ENCODE measurements at regions of chr19 and their contacts with region 1.

Region 1: DNA sequence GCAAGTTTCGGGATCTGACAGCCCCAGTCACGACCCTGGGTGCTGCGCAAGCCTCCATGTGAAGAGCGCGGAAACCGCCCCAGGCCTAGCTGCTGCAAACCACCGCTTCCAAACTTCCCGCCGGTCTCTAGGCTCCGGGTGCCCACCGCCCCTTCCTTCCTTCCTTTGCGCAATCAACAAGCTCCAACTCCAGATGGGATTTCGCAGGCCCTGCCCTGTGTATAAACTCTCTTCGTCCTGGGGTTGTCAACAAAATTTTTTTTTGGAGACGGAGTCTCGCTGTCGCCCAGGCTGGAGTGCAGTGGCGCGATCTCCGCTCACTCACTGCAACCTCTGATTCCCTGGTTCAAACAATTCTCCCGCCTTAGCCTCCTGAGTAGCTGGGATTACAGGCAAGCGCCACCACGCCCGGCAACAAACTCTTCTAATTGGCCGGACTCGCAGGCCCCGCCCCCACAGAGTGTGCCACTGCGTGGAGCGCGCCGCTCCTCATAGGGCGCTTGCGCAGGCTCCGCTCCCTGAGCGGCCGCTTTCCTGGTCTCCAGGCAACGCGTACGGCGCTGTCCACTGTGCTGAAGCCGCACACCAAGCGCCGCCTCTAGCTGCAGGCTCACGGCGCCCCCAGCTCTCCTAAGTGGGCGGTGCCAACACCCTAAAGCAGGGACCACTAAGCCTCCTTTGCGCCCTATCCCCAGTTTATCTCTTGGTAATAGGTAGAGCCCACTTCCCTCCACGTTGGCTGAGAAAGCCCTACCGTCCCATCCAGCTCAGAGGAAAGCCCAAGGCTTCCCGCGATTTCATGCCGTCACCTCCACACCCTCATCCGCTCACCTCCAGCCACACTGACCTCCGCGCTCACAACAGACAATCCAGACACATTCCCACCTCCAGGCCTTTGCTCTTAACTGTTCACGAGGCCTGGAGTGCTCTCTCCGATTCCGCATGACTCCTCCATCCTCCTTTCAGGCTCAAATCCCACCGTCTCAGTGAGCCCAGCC is 5.5 kb upstream of the QTRT1 start:
- DNase-seq: peak; percentile 90
- ATAC-seq: peak; percentile 98
- H3K4me3 ChIP-seq: peak overlapping the region; percentile 6 to 54 (median 25)
- H3K4me3 Mint-ChIP-seq: peak overlapping the region; percentile 80
- H3K27ac ChIP-seq: no peak overlapping the region
- H3K27ac Mint-ChIP-seq: peak overlapping the region; percentile 67
- H3K4me1 ChIP-seq: peaks cover 10 to 15% of the 10 kb centered on the region in 2 donors
- H3K4me1 Mint-ChIP-seq: peaks cover 17% of the 10 kb centered on the region
- H3K27me3 ChIP-seq: no peaks in the 10 kb centered on the region
- H3K27me3 Mint-ChIP-seq: no peaks in the 10 kb centered on the region
- CTCF ChIP-seq: no peak

Region 2: GRCh38 chr19:10478903-10479384 is 216.8 kb before region 1 on chr19:
- CTCF ChIA-PET with region 1: interaction called, 21 read pairs
- POLR2A ChIA-PET with region 1: no interaction called
- intact Hi-C with region 1: no loop called
- DNase-seq: peak; percentile 90
- ATAC-seq: peak; percentile 91
- H3K4me3 ChIP-seq: peak overlapping the region in 4 of 5 experiments; percentile 5 to 41 (median 16)
- H3K4me3 Mint-ChIP-seq: peak overlapping the region; percentile 55
- H3K27ac ChIP-seq: no peak overlapping the region
- H3K27ac Mint-ChIP-seq: peak overlapping the region; percentile 37
- H3K4me1 ChIP-seq: peaks cover 9 to 13% of the 10 kb centered on the region in 2 donors
- H3K4me1 Mint-ChIP-seq: peaks cover 16% of the 10 kb centered on the region
- H3K27me3 ChIP-seq: no peaks in the 10 kb centered on the region
- H3K27me3 Mint-ChIP-seq: no peaks in the 10 kb centered on the region
- CTCF ChIP-seq: peak; percentile 80

Region 3: DNA sequence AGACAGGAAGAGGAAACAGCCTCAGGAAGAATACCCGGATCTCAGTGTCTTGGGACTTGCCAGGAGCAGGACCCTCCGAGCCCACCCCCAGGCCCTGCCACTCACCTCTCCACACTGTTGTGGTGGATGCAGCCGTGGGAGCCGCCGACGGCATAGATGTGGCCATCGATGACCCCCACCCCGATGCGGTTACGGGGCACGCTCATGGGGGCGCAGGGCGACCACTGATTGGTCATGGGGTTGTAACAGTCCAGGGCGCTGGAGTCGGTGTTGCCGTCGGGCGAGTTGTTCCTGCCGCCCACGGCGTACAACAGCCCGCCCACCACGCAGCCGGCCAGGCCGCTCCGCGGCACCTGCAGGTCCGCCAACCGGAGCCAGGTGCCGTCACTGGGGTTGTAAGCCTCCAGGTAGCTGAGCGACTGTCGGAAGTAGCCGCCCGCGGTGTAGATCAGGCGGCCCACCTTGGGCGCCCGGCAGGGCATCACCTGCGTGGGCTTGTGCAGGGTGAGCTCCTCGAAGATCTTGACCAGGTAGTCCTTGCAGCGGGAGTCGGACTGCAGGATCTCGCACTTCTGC is 204.1 kb before region 1 on chr19:
- CTCF ChIA-PET with region 1: interaction called, 14 read pairs
- POLR2A ChIA-PET with region 1: no interaction called
- intact Hi-C with region 1: no loop called
- DNase-seq: no peak
- ATAC-seq: no peak
- H3K4me3 ChIP-seq: no peak overlapping the region
- H3K4me3 Mint-ChIP-seq: no peak overlapping the region
- H3K27ac ChIP-seq: no peak overlapping the region
- H3K27ac Mint-ChIP-seq: no peak overlapping the region
- H3K4me1 ChIP-seq: no peaks in the 10 kb centered on the region
- H3K4me1 Mint-ChIP-seq: peaks cover 3% of the 10 kb centered on the region
- H3K27me3 ChIP-seq: no peaks in the 10 kb centered on the region
- H3K27me3 Mint-ChIP-seq: no peaks in the 10 kb centered on the region
- CTCF ChIP-seq: no peak

Region 4: GRCh38 chr19:10510301-10510802 is 185.3 kb before region 1 on chr19:
- CTCF ChIA-PET with region 1: interaction called, 11 read pairs
- POLR2A ChIA-PET with region 1: no interaction called
- intact Hi-C with region 1: loop called (anchors 2 kb)
- DNase-seq: peak; percentile 71
- ATAC-seq: peak; percentile 44
- H3K4me3 ChIP-seq: no peak overlapping the region
- H3K4me3 Mint-ChIP-seq: no peak overlapping the region
- H3K27ac ChIP-seq: no peak overlapping the region
- H3K27ac Mint-ChIP-seq: no peak overlapping the region
- H3K4me1 ChIP-seq: peaks cover 16 to 17% of the 10 kb centered on the region in 2 donors
- H3K4me1 Mint-ChIP-seq: peaks cover 15% of the 10 kb centered on the region
- H3K27me3 ChIP-seq: peaks cover 0 to 43% (median 20%) of the 10 kb centered on the region in 4 experiments
- H3K27me3 Mint-ChIP-seq: peaks cover 19% of the 10 kb centered on the region
- CTCF ChIP-seq: peak; percentile 91

Region 5: GRCh38 chr19:10543420-10544241 is 152.1 kb before region 1 on chr19 and contains the start of gene ATG4D:
- CTCF ChIA-PET with region 1: interaction called, 10 read pairs
- POLR2A ChIA-PET with region 1: no interaction called
- intact Hi-C with region 1: no loop called
- DNase-seq: peak; percentile 88
- ATAC-seq: peak; percentile 82
- H3K4me3 ChIP-seq: peak within 1 kb of the TSS; percentile 27 to 88 (median 75)
- H3K4me3 Mint-ChIP-seq: peak within 1 kb of the TSS; percentile 89
- H3K27ac ChIP-seq: peak within 1 kb of the TSS; percentile 34 to 85
- H3K27ac Mint-ChIP-seq: peak within 1 kb of the TSS; percentile 87
- H3K4me1 ChIP-seq: peaks cover 12 to 19% of the 10 kb centered on the region in 2 donors
- H3K4me1 Mint-ChIP-seq: peaks cover 16% of the 10 kb centered on the region
- H3K27me3 ChIP-seq: peaks cover 0 to 5% (median 0%) of the 10 kb centered on the region in 4 experiments
- H3K27me3 Mint-ChIP-seq: peaks cover 6% of the 10 kb centered on the region
- CTCF ChIP-seq: no peak
- total RNA-seq, gene ATG4D: 58.8 and 59.2 TPM in 2 replicates

Measured in B cell (primary cell).